Heart left ventricle (tissue), 16 donors: ENCODE measurements at regions of chr6 and their contacts with region 1.

Region 1: GRCh38 chr6:15389765-15390723 is 144.2 kb downstream of the JARID2 start:
- DNase-seq: no peak
- ATAC-seq: peak; percentile 4 to 60 (median 53)
- H3K4me3 ChIP-seq: peak overlapping the region in 1 of 12 donors; percentile 0
- H3K27ac ChIP-seq: peak overlapping the region in 10 of 12 donors; percentile 1 to 70 (median 43)
- H3K4me1 ChIP-seq: peaks cover 0 to 68% (median 44%) of the 10 kb centered on the region in 12 donors
- H3K27me3 ChIP-seq: no peaks in the 10 kb centered on the region
- CTCF ChIP-seq: peak; percentile 42 to 78 (median 64)
- POLR2A ChIP-seq: no peak

Region 2: GRCh38 chr6:14200047-14200446 is 1190.0 kb before region 1 on chr6:
- intact Hi-C with region 1: loop called in 1 of 10 experiments (anchors 10 kb)
- DNase-seq: no peak
- ATAC-seq: no peak
- H3K4me3 ChIP-seq: no peak overlapping the region
- H3K27ac ChIP-seq: no peak overlapping the region
- H3K4me1 ChIP-seq: no peaks in the 10 kb centered on the region
- H3K27me3 ChIP-seq: no peaks in the 10 kb centered on the region
- CTCF ChIP-seq: no peak
- POLR2A ChIP-seq: no peak

Region 3: GRCh38 chr6:14638906-14639761 is 750.9 kb before region 1 on chr6:
- intact Hi-C with region 1: loop called in 1 of 10 experiments (anchors 10 kb)
- DNase-seq: peak; percentile 73 to 81 (median 77)
- ATAC-seq: peak; percentile 90 to 95 (median 93)
- H3K4me3 ChIP-seq: peak overlapping the region in 9 of 12 donors; percentile 24 to 49 (median 37)
- H3K27ac ChIP-seq: peak overlapping the region; percentile 66 to 90 (median 86)
- H3K4me1 ChIP-seq: peaks cover 4 to 50% (median 24%) of the 10 kb centered on the region in 12 donors
- H3K27me3 ChIP-seq: no peaks in the 10 kb centered on the region
- CTCF ChIP-seq: peak in 3 of 12 donors; percentile 7 to 27 (median 15)
- POLR2A ChIP-seq: no peak

Region 4: GRCh38 chr6:14876778-14877613 is 513.0 kb before region 1 on chr6:
- intact Hi-C with region 1: loop called in 1 of 10 experiments (anchors 10 kb)
- DNase-seq: peak in 1 of 5 donors; percentile 37
- ATAC-seq: peak; percentile 86 to 94 (median 90)
- H3K4me3 ChIP-seq: no peak overlapping the region
- H3K27ac ChIP-seq: peak overlapping the region; percentile 63 to 91 (median 75)
- H3K4me1 ChIP-seq: peaks cover 4 to 63% (median 34%) of the 10 kb centered on the region in 12 donors
- H3K27me3 ChIP-seq: no peaks in the 10 kb centered on the region
- CTCF ChIP-seq: no peak
- POLR2A ChIP-seq: no peak

Region 5: GRCh38 chr6:15254070-15254841 is 135.8 kb before region 1 on chr6:
- intact Hi-C with region 1: loop called in 4 of 10 experiments (anchors 5 to 10 kb)
- DNase-seq: no peak
- ATAC-seq: no peak
- H3K4me3 ChIP-seq: no peak overlapping the region
- H3K27ac ChIP-seq: peak overlapping the region in 1 of 12 donors; percentile 47
- H3K4me1 ChIP-seq: peaks cover 0 to 95% (median 45%) of the 10 kb centered on the region in 12 donors
- H3K27me3 ChIP-seq: no peaks in the 10 kb centered on the region
- CTCF ChIP-seq: peak in 1 of 12 donors; percentile 11
- POLR2A ChIP-seq: no peak